ENCODE measurements at regions of chr22 and their contacts with region 1.

Region 1: GRCh38 chr22:39927544-39927943 is 26.7 kb downstream of the GRAP2 start:
- DNase-seq: no peak
- ATAC-seq: no peak
- H3K4me3 ChIP-seq: peak overlapping the region; percentile 51
- H3K4me3 Mint-ChIP-seq: no peak overlapping the region
- H3K27ac ChIP-seq: peak overlapping the region; percentile 38 to 58
- H3K27ac Mint-ChIP-seq: no peak overlapping the region
- H3K4me1 ChIP-seq: peaks cover 89% of the 10 kb centered on the region
- H3K4me1 Mint-ChIP-seq: peaks cover 39% of the 10 kb centered on the region
- H3K27me3 ChIP-seq: no peaks in the 10 kb centered on the region
- H3K27me3 Mint-ChIP-seq: no peaks in the 10 kb centered on the region
- CTCF ChIP-seq: no peak

Region 2: GRCh38 chr22:39900306-39901227 is 27.0 kb before region 1 on chr22 and contains the start of gene GRAP2:
- CTCF ChIA-PET with region 1: interaction called, 6 read pairs
- POLR2A ChIA-PET with region 1: interaction called, 393 read pairs
- intact Hi-C with region 1: loop called in 1 of 2 experiments (anchors 2 kb)
- DNase-seq: peak; percentile 54 to 94 (median 66)
- ATAC-seq: peak; percentile 96
- H3K4me3 ChIP-seq: peak within 1 kb of the TSS; percentile 70
- H3K4me3 Mint-ChIP-seq: peak within 1 kb of the TSS; percentile 89
- H3K27ac ChIP-seq: peak within 1 kb of the TSS; percentile 53 to 66
- H3K27ac Mint-ChIP-seq: no peak within 1 kb of the TSS
- H3K4me1 ChIP-seq: peaks cover 28% of the 10 kb centered on the region
- H3K4me1 Mint-ChIP-seq: peaks cover 23% of the 10 kb centered on the region
- H3K27me3 ChIP-seq: no peaks in the 10 kb centered on the region
- H3K27me3 Mint-ChIP-seq: no peaks in the 10 kb centered on the region
- CTCF ChIP-seq: no peak
- total RNA-seq, gene GRAP2: 65.3 to 75.6 TPM

Region 3: DNA sequence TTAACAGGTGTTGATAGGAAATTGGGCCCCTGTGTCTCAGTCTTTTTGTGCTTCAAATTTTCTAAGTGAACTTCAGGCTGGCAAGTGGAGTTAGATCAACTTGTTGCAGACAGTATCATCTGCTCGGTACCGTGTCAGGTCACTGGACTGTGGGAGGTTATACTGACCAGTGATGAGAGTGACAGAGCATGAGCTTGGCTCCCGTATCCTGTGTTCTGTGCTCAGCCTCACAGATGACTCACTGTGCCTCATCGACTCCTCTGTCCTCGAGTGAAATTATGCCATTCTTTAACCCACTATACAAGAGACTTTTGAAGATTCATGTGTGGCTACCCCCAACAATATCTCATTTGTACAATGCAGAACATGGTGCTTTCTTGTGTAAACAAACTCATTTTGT is 18.8 kb before region 1 on chr22:
- CTCF ChIA-PET with region 1: interaction called, 3 read pairs
- POLR2A ChIA-PET with region 1: interaction called, 393 read pairs
- intact Hi-C with region 1: loop called in 1 of 2 experiments (anchors 2 kb)
- DNase-seq: peak in 7 of 14 experiments; percentile 24 to 64 (median 59)
- ATAC-seq: peak; percentile 45
- H3K4me3 ChIP-seq: peak overlapping the region; percentile 70
- H3K4me3 Mint-ChIP-seq: peak overlapping the region; percentile 97
- H3K27ac ChIP-seq: peak overlapping the region; percentile 62 to 80
- H3K27ac Mint-ChIP-seq: no peak overlapping the region
- H3K4me1 ChIP-seq: peaks cover 66% of the 10 kb centered on the region
- H3K4me1 Mint-ChIP-seq: peaks cover 90% of the 10 kb centered on the region
- H3K27me3 ChIP-seq: no peaks in the 10 kb centered on the region
- H3K27me3 Mint-ChIP-seq: no peaks in the 10 kb centered on the region
- CTCF ChIP-seq: no peak

Measured in CD4-positive, alpha-beta T cell (primary cell).